Sigmoid colon (tissue), 7 donors: ENCODE measurements at regions of chrX and their contacts with region 1.

Region 1: DNA sequence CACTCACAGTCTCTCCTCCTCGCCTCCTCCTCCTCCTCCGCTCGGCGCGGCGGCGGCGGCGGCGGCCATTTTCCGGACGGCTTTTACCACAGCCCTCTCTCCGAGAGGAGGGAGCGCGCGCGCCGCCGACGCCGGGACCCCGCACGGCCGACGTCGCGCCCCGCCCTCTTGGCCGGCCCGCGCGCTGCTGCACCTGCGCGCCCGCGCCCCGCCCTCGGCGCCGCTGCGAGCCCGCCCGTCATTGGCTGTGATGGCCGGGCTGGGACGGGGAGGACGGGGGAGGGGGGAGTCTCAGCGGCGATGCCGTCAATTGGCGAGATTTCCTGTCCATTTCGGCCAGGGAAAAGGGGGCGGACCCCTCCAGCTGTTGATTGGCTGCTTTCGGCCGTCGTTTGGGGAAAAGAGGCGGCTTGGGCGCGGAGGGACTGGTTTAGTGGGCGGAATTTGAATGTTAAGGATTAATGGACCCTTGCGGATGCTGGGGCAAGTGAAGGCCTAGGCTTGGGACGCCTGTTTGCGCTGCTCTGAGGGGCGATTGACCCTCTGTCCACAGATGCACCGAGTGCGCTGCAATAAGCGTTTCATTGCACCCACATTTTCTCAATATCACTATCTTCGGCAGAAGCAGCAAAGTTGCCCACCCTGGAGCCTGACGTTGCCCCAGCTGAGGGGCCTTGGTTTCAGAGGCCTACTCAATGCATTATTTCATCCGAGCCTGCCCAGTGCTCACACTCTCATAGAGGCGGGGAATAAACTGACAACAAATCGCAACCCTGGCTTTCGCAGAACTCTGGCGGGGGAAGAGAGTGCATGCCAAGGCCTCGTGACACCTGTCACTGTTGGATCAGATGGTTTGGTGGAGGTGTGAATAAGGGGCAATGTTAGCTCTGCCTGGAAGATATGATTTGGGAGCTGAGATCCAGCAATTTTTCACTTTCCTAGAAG is at the start of gene MECP2:
- DNase-seq: peak; percentile 96
- H3K4me3 ChIP-seq: peak within 1 kb of the TSS; percentile 64 to 81 (median 74)
- H3K27ac ChIP-seq: peak within 1 kb of the TSS; percentile 95 to 100 (median 98)
- H3K4me1 ChIP-seq: peaks cover 0 to 39% (median 21%) of the 10 kb centered on the region in 4 donors
- H3K27me3 ChIP-seq: no peaks in the 10 kb centered on the region
- CTCF ChIP-seq: no peak
- EP300 ChIP-seq: no peak
- POLR2A ChIP-seq: no peak
- total RNA-seq, gene MECP2: 43.9 to 57.9 (median 49.6) TPM

Region 2: GRCh38 chrX:153708415-153708814 is 389.5 kb before region 1 on chrX:
- intact Hi-C with region 1: no loop called
- DNase-seq: peak; percentile 89
- H3K4me3 ChIP-seq: no peak overlapping the region
- H3K27ac ChIP-seq: peak overlapping the region in 2 of 4 donors; percentile 34 to 53
- H3K4me1 ChIP-seq: peaks cover 0 to 25% (median 8%) of the 10 kb centered on the region in 4 donors
- H3K27me3 ChIP-seq: no peaks in the 10 kb centered on the region
- CTCF ChIP-seq: peak; percentile 55 to 62 (median 61)
- EP300 ChIP-seq: no peak
- POLR2A ChIP-seq: no peak

Region 3: DNA sequence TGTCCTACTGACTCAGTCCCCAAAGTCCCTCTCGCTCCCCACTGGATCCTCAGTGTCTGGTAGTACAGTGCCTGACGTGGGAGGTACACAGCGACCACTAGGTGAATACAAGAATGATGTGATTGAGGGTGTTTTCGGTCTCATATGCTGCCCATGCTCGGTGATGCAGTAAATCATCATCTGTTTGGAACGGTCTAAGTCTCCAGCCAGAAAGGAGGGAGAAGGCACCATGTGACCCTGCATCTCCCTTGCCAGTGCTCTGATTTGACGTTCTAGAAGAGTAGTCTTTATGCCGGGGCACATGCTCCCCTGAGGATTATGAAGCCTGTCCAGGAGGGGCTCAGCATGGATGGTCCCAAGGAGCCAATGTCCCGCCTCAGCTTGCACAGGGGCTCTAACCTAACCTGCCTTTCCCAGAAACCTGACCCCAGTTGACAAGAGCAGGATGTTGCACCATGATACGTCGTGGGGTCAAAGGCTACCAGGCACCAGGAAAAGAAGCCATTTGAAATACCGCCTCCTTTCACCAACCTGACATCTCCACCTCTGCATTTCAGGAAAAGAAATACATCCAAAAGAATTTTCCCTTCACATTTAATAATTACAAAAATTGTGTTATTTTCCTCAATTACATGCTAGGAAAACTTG is 347.6 kb before region 1 on chrX:
- intact Hi-C with region 1: no loop called
- DNase-seq: no peak
- H3K4me3 ChIP-seq: no peak overlapping the region
- H3K27ac ChIP-seq: no peak overlapping the region
- H3K4me1 ChIP-seq: no peaks in the 10 kb centered on the region
- H3K27me3 ChIP-seq: no peaks in the 10 kb centered on the region
- CTCF ChIP-seq: no peak
- EP300 ChIP-seq: no peak
- POLR2A ChIP-seq: no peak

Region 4: DNA sequence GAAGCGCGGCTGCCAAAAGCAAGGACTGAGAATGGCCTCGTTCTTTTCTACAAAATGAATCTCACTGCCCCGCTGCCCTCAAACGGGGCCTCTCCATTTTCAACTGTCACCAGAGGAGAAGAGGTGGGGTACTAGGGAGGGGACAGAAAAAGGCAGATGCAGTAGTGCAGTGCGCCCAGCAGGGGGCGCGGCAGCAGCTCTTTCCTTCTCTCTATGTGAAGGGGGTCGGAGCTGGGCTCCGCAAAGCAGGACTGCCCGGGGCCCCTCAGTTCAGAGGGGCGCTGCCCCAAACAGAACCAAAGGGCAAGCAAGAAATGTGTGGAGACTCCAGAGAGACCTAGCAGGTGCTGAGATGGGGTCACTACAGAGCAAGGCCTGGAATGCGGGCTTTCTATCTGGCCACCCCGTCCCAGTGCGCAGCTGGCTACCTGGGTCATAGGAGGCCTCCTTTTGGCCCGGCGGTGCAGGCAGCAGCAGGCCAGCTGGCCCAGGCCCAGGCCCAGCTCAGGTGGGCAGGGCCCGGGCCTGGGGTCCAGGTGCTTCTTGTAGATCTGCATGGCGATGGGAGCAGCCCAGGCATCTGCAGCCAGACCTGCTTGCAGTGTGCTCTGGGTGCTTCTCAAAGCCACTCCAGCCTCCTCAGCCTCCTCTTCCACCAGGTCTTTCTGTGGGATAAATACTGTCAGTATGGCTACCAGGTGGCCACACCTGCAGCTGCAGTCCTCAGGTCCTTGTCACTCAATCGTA is 84.1 kb before region 1 on chrX:
- intact Hi-C with region 1: loop called (anchors 5 kb)
- DNase-seq: no peak
- H3K4me3 ChIP-seq: no peak overlapping the region
- H3K27ac ChIP-seq: peak overlapping the region in 1 of 4 donors; percentile 0
- H3K4me1 ChIP-seq: peaks cover 0 to 15% (median 8%) of the 10 kb centered on the region in 4 donors
- H3K27me3 ChIP-seq: peaks cover 0 to 2% (median 0%) of the 10 kb centered on the region in 3 donors
- CTCF ChIP-seq: peak; percentile 60 to 86 (median 76)
- EP300 ChIP-seq: no peak
- POLR2A ChIP-seq: no peak